B cell (primary cell): ENCODE measurements at regions of chr7 and their contacts with region 1.

Region 1: GRCh38 chr7:50632561-50633413 is 67.6 kb upstream of the DDC start:
- DNase-seq: peak; percentile 69
- ATAC-seq: peak; percentile 73
- H3K4me3 ChIP-seq: no peak overlapping the region
- H3K4me3 Mint-ChIP-seq: no peak overlapping the region
- H3K27ac ChIP-seq: no peak overlapping the region
- H3K27ac Mint-ChIP-seq: no peak overlapping the region
- H3K4me1 ChIP-seq: peaks cover 0 to 6% of the 10 kb centered on the region in 2 donors
- H3K4me1 Mint-ChIP-seq: peaks cover 12% of the 10 kb centered on the region
- H3K27me3 ChIP-seq: peaks cover 0 to 9% (median 3%) of the 10 kb centered on the region in 4 experiments
- H3K27me3 Mint-ChIP-seq: peaks cover 36% of the 10 kb centered on the region
- CTCF ChIP-seq: peak; percentile 96

Region 2: GRCh38 chr7:50142425-50143017 is 490.3 kb before region 1 on chr7:
- CTCF ChIA-PET with region 1: interaction called, 25 read pairs
- POLR2A ChIA-PET with region 1: no interaction called
- intact Hi-C with region 1: loop called (anchors 1 kb)
- DNase-seq: peak; percentile 71
- ATAC-seq: peak; percentile 71
- H3K4me3 ChIP-seq: peak overlapping the region in 4 of 5 experiments; percentile 8 to 33 (median 30)
- H3K4me3 Mint-ChIP-seq: peak overlapping the region; percentile 80
- H3K27ac ChIP-seq: peak overlapping the region in 1 of 2 donors; percentile 62
- H3K27ac Mint-ChIP-seq: peak overlapping the region; percentile 62
- H3K4me1 ChIP-seq: peaks cover 42 to 50% of the 10 kb centered on the region in 2 donors
- H3K4me1 Mint-ChIP-seq: peaks cover 49% of the 10 kb centered on the region
- H3K27me3 ChIP-seq: no peaks in the 10 kb centered on the region
- H3K27me3 Mint-ChIP-seq: no peaks in the 10 kb centered on the region
- CTCF ChIP-seq: peak; percentile 94

Region 3: GRCh38 chr7:50467817-50468610 is 164.8 kb before region 1 on chr7:
- CTCF ChIA-PET with region 1: interaction called, 17 read pairs
- POLR2A ChIA-PET with region 1: no interaction called
- intact Hi-C with region 1: loop called (anchors 1 kb)
- DNase-seq: peak; percentile 79
- ATAC-seq: peak; percentile 94
- H3K4me3 ChIP-seq: peak overlapping the region in 3 of 5 experiments; percentile 7 to 56 (median 34)
- H3K4me3 Mint-ChIP-seq: peak overlapping the region; percentile 54
- H3K27ac ChIP-seq: no peak overlapping the region
- H3K27ac Mint-ChIP-seq: no peak overlapping the region
- H3K4me1 ChIP-seq: peaks cover 9 to 10% of the 10 kb centered on the region in 2 donors
- H3K4me1 Mint-ChIP-seq: peaks cover 9% of the 10 kb centered on the region
- H3K27me3 ChIP-seq: no peaks in the 10 kb centered on the region
- H3K27me3 Mint-ChIP-seq: peaks cover 5% of the 10 kb centered on the region
- CTCF ChIP-seq: peak; percentile 81

Region 4: GRCh38 chr7:50644586-50644985 is 11.8 kb after region 1 on chr7:
- CTCF ChIA-PET with region 1: interaction called, 24 read pairs
- POLR2A ChIA-PET with region 1: no interaction called
- intact Hi-C with region 1: no loop called
- DNase-seq: no peak
- ATAC-seq: no peak
- H3K4me3 ChIP-seq: no peak overlapping the region
- H3K4me3 Mint-ChIP-seq: no peak overlapping the region
- H3K27ac ChIP-seq: no peak overlapping the region
- H3K27ac Mint-ChIP-seq: no peak overlapping the region
- H3K4me1 ChIP-seq: no peaks in the 10 kb centered on the region
- H3K4me1 Mint-ChIP-seq: no peaks in the 10 kb centered on the region
- H3K27me3 ChIP-seq: no peaks in the 10 kb centered on the region
- H3K27me3 Mint-ChIP-seq: peaks cover 9% of the 10 kb centered on the region
- CTCF ChIP-seq: no peak